Adrenal gland (tissue), 19 donors: ENCODE measurements at regions of chr1 and their contacts with region 1.

Region 1: GRCh38 chr1:16418823-16419425 is 18.3 kb downstream of the SPATA21 start:
- DNase-seq: no peak
- H3K4me3 ChIP-seq: no peak overlapping the region
- H3K27ac ChIP-seq: no peak overlapping the region
- H3K4me1 ChIP-seq: no peaks in the 10 kb centered on the region
- H3K27me3 ChIP-seq: no peaks in the 10 kb centered on the region
- CTCF ChIP-seq: no peak
- POLR2A ChIP-seq: no peak

Region 2: DNA sequence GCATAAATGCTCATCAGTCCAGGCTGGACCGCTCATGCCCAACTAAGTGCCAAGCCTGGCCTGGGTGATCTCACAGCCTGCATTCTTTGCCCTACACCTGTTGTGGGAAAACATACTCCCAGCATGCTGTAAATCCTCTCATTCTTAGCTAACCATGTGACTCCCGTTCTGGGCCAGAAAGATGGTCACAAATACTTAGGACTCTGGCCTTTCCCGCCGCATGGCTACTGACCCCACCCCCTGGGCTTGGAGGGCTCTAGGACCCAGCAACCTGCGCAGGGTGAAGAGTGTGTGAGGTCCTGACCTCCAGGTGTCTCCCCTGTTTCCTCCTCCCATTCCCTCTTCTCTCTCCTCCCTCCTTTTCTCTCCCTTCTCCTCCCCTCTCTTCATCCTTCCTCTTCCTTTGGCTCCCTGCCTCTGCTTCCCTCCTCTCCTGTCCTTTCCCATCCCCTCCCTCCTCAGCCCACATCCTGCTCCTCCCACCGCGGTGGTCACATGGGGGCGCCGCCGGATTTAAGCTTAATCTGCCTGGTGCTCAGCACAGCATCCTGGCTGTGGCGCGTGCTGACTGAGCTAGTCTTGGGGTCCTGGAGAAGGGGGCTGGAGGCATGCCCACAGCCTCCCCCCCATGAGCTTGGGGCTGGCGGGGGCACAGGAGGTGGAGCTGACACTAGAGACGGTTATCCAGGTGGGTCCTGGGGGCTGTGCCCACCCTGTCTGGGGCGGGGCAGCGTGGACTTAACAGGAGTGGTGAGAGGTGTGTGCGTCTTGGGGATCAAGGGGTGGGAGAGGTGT is 502.7 kb after region 1 on chr1 and contains the start of gene CROCC:
- intact Hi-C with region 1: loop called in 1 of 2 experiments (anchors 10 kb)
- DNase-seq: no peak
- H3K4me3 ChIP-seq: no peak within 1 kb of the TSS
- H3K27ac ChIP-seq: no peak within 1 kb of the TSS
- H3K4me1 ChIP-seq: no peaks in the 10 kb centered on the region
- H3K27me3 ChIP-seq: no peaks in the 10 kb centered on the region
- CTCF ChIP-seq: no peak
- POLR2A ChIP-seq: no peak
- total RNA-seq, gene CROCC: 5.6 to 34.0 (median 18.0) TPM